Cardiac septum (tissue), 1 donor: ENCODE measurements at regions of chr2 and their contacts with region 1.

Region 1: DNA sequence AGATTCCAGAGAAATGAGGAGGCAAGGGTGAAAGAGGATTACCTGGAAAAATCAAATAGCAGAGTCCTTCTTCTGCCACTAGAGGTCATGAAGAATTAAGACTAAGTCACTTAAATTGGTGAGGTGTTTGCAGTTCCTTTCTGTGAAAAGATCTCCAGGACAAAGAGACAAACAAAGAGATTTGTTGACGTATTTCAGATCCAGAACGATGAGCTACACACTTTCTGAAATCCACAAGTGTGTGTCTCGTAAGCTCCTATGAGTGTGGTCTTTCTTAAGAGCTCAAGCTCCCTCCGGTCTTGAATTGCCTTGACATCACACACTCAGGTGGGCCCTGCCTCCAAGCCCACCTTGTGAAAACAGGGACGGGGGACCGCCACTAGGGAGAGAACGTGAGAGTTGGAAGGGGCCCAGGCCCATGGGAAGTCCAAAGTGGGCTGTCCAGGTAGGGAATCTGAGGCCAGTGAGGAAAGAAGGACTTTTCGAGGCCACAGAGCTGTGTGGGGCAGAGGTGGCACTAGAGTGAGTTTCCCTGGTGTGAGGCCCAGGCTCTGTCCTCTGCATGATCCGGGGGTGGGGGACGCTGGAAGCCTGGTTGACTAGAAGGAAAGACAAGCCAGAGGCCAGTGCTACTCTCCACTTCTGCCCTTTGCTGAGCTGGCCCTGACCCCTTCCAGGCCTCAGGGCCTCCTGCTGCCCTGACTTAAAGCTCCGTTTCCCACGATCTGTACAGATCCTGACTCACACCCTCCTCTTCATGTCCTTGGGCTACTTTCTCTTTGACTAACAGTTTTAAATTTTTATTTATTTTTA is 168.1 kb upstream of the NCK2 start:
- DNase-seq: no peak

Region 2: DNA sequence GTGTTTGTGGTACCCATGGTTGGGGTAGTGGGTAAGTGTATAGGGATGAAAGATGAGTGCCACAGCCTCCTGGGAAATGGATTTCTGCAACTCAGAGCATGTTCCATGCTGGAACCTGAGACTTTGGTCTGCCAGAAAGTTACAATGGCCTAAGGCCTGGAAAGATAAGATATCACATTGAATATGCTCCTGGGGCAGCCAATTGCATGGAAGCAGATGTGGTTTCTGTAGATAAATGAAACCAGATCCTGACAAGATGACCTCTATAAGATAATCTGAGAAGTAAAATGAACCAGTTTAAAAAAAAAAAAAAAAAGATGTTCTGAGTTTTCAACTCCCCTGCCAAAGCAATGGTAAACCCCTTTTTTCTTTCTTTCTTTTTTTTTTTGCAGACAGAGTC is 76.7 kb after region 1 on chr2:
- intact Hi-C with region 1: no loop called
- DNase-seq: no peak

Region 3: DNA sequence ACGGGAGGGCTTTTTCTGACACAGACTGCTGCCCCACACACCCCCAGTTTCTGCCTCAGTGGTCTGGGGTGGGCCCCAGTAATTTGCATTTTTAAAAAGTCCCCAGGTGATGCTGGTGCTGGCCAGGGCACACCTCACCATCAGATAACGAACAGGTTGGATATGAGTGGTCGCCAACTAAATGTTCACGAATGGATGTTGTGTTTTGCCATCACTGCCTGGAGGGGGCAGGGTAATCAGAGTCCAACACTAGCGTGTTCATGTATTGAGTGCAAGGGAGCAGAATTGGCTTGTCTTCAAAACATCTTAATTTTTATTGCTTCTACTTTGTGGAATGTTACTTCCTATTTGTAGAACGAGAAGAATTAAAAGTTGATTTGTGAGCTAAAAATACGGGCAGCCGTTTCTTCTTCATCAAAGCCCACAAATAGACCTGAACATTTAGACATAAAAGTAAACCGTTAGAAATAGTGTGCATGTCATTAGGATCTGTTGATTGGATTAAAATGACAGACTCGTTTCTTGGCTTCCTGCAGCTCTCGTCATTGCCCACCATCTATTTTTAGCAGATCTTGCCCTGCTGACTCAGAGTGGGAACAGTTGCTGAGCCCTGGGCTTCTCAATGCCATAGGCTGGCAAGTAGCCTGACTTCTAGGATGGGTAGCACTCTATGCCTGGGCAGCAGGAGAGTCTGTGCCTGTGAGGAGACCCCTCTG is 213.3 kb after region 1 on chr2:
- intact Hi-C with region 1: loop called (anchors 5 kb)
- DNase-seq: no peak

Region 4: GRCh38 chr2:105969555-105969954 is 392.9 kb after region 1 on chr2:
- intact Hi-C with region 1: loop called (anchors 10 kb)
- DNase-seq: no peak

Region 5: GRCh38 chr2:106085181-106085940 is 508.7 kb after region 1 on chr2:
- intact Hi-C with region 1: loop called (anchors 2 kb)
- DNase-seq: no peak